Naive thymus-derived CD4-positive, alpha-beta T cell (primary cell): ENCODE measurements at regions of chr10 and their contacts with region 1.

Region 1: DNA sequence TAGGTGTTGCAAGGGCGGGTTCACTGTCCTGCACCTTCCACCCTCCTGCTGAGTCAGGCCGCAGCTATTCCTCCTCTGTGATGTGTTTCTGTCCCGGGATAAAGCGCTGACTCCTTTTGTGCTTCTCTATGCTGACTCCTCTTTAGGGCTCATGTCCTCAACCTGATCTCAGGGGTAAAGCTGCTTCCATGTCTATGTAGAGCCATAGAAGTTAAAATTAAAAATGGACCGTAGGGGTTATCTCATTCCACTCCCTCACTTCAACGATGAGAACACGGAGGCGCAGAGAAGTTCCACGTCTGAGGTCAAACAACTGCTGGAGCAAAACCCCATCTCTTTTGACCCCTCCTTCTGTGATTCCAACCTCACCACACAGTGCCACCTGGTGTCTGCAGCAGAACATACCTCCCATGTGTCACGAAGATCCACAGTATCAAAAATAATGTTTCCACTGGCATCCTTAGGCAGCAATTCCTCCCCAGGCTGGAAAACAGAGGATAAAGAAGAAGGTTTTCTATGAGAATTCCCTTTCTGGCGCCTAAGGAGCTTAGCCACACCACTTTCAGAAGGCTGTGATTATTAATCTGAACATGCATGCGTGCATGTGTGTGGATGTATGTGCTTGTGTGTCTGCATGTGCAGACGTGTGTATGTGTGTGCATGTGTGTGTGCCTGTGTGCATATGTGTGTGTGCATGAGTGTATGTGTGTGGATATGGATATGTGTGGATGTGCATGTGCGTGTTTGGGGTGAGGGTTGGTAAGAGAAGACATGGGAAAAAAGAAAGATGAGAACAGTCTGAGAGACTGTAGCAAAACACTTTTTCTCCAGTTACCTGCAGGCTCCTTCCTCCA is 81.2 kb upstream of the UCN3 start:
- DNase-seq: peak; percentile 19 to 60 (median 46)
- ATAC-seq: peak; percentile 89
- H3K4me3 ChIP-seq: no peak overlapping the region
- H3K4me3 Mint-ChIP-seq: peak overlapping the region; percentile 4 to 67 (median 56)
- H3K27ac ChIP-seq: no peak overlapping the region
- H3K27ac Mint-ChIP-seq: peak overlapping the region in 4 of 9 donors; percentile 12 to 81 (median 42)
- H3K4me1 ChIP-seq: peaks cover 6 to 11% of the 10 kb centered on the region in 2 donors
- H3K4me1 Mint-ChIP-seq: peaks cover 10 to 37% (median 25%) of the 10 kb centered on the region in 7 donors
- H3K27me3 ChIP-seq: no peaks in the 10 kb centered on the region
- H3K27me3 Mint-ChIP-seq: peaks cover 0 to 26% (median 0%) of the 10 kb centered on the region in 5 donors

Region 2: DNA sequence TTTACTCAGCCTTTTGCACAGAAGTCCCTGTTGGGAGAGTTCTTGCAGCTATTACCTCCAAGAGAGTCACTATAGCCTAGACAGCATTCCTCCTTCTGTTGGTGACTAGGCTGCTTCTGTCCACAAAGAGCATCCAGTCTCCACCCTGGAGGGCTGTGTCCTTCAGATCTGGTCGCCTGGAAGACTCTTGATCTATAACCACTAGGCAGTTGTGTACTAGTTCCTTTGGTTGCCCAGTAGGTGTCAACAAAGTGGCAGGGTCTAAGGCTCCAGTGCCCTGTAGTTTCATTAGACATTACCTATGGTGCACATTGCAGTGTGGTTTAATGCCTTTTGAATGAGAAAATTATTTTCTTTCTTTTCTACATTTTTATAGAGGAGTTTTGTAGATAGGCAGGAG is 268.6 kb before region 1 on chr10:
- CTCF ChIA-PET with region 1: no interaction called
- POLR2A ChIA-PET with region 1: no interaction called
- intact Hi-C with region 1: loop called in 1 of 2 experiments (anchors 1 kb)
- DNase-seq: peak in 1 of 9 donors; percentile 1
- ATAC-seq: no peak
- H3K4me3 ChIP-seq: no peak overlapping the region
- H3K4me3 Mint-ChIP-seq: no peak overlapping the region
- H3K27ac ChIP-seq: no peak overlapping the region
- H3K27ac Mint-ChIP-seq: no peak overlapping the region
- H3K4me1 ChIP-seq: no peaks in the 10 kb centered on the region
- H3K4me1 Mint-ChIP-seq: no peaks in the 10 kb centered on the region
- H3K27me3 ChIP-seq: no peaks in the 10 kb centered on the region
- H3K27me3 Mint-ChIP-seq: peaks cover 0 to 14% (median 4%) of the 10 kb centered on the region in 5 donors

Region 3: DNA sequence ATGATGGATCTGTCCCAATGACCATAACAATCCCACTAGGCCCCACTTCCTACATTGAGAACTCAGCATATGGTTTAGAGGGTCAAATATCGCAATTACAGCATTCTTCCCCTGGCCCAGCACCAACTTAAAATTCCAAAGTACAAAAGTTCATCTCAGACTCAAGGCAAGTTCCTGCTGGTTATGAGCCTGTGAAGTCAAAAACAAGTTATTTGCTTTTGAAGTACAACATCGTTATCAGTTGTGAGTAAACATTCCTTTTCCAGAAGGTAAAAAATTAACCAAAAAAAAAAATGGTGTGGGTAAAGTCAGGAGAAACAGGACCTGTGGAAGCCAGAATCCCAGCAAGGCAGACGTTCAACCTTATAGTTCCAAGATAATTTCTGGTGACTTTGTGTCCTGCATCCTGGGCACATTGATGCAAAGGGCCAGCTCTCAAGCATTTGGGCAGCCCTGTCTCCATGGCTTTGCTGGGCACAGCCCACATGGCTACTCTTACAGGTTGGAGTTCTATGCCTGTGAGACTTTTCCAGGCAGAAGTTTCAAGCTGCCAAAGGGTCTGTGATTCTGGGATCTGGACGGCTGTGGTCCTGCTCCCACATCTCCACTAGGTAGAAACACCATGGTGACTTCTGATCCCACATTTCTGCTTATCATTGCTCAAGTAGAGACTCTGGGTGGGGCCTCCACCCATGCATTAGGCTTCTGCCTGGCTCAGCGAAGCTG is 136.1 kb before region 1 on chr10:
- CTCF ChIA-PET with region 1: no interaction called
- POLR2A ChIA-PET with region 1: no interaction called
- intact Hi-C with region 1: no loop called
- DNase-seq: no peak
- ATAC-seq: no peak
- H3K4me3 ChIP-seq: no peak overlapping the region
- H3K4me3 Mint-ChIP-seq: no peak overlapping the region
- H3K27ac ChIP-seq: no peak overlapping the region
- H3K27ac Mint-ChIP-seq: no peak overlapping the region
- H3K4me1 ChIP-seq: no peaks in the 10 kb centered on the region
- H3K4me1 Mint-ChIP-seq: no peaks in the 10 kb centered on the region
- H3K27me3 ChIP-seq: no peaks in the 10 kb centered on the region
- H3K27me3 Mint-ChIP-seq: peaks cover 0 to 4% (median 0%) of the 10 kb centered on the region in 5 donors

Region 4: GRCh38 chr10:5165738-5166137 is 117.8 kb before region 1 on chr10:
- CTCF ChIA-PET with region 1: no interaction called
- POLR2A ChIA-PET with region 1: no interaction called
- intact Hi-C with region 1: no loop called
- DNase-seq: no peak
- ATAC-seq: no peak
- H3K4me3 ChIP-seq: no peak overlapping the region
- H3K4me3 Mint-ChIP-seq: no peak overlapping the region
- H3K27ac ChIP-seq: no peak overlapping the region
- H3K27ac Mint-ChIP-seq: no peak overlapping the region
- H3K4me1 ChIP-seq: no peaks in the 10 kb centered on the region
- H3K4me1 Mint-ChIP-seq: peaks cover 0 to 10% (median 0%) of the 10 kb centered on the region in 7 donors
- H3K27me3 ChIP-seq: no peaks in the 10 kb centered on the region
- H3K27me3 Mint-ChIP-seq: peaks cover 0 to 23% (median 0%) of the 10 kb centered on the region in 5 donors

Region 5: GRCh38 chr10:5211696-5212536 is 71.6 kb before region 1 on chr10:
- CTCF ChIA-PET with region 1: interaction called, 3 read pairs
- POLR2A ChIA-PET with region 1: no interaction called
- intact Hi-C with region 1: loop called in 1 of 2 experiments (anchors 5 kb)
- DNase-seq: no peak
- ATAC-seq: no peak
- H3K4me3 ChIP-seq: no peak overlapping the region
- H3K4me3 Mint-ChIP-seq: no peak overlapping the region
- H3K27ac ChIP-seq: no peak overlapping the region
- H3K27ac Mint-ChIP-seq: no peak overlapping the region
- H3K4me1 ChIP-seq: no peaks in the 10 kb centered on the region
- H3K4me1 Mint-ChIP-seq: peaks cover 0 to 3% (median 1%) of the 10 kb centered on the region in 7 donors
- H3K27me3 ChIP-seq: no peaks in the 10 kb centered on the region
- H3K27me3 Mint-ChIP-seq: peaks cover 0 to 38% (median 0%) of the 10 kb centered on the region in 5 donors

Region 6: GRCh38 chr10:5343562-5343961 is 60.0 kb after region 1 on chr10:
- CTCF ChIA-PET with region 1: interaction called, 9 read pairs
- POLR2A ChIA-PET with region 1: interaction called, 3 read pairs
- intact Hi-C with region 1: loop called in 1 of 2 experiments (anchors 2 kb)
- DNase-seq: peak in 3 of 9 donors; percentile 5 to 18 (median 12)
- ATAC-seq: peak; percentile 44
- H3K4me3 ChIP-seq: no peak overlapping the region
- H3K4me3 Mint-ChIP-seq: no peak overlapping the region
- H3K27ac ChIP-seq: no peak overlapping the region
- H3K27ac Mint-ChIP-seq: no peak overlapping the region
- H3K4me1 ChIP-seq: no peaks in the 10 kb centered on the region
- H3K4me1 Mint-ChIP-seq: peaks cover 0 to 7% (median 4%) of the 10 kb centered on the region in 7 donors
- H3K27me3 ChIP-seq: no peaks in the 10 kb centered on the region
- H3K27me3 Mint-ChIP-seq: peaks cover 0 to 11% (median 0%) of the 10 kb centered on the region in 5 donors

Region 7: DNA sequence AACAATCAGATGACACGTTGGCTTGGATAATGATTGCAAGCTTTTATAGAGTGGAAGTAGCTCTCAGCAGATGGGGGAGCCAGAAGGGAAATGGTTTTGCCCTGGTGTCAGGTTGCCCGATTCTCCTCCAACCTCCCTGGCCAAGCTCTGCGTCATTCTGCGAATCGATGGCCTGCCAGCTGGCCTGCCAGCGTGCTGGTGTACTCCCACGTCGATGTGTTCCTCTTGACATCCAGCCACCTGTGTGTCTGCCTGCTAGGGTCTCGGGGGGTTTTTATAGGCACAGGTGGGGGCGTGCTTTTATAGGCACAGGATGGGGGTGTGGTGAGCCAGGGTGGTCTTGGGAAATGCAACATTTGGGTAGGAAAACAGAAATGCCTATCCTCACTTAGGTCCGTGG is 133.4 kb after region 1 on chr10:
- CTCF ChIA-PET with region 1: no interaction called
- POLR2A ChIA-PET with region 1: no interaction called
- intact Hi-C with region 1: loop called in 1 of 2 experiments (anchors 5 kb)
- DNase-seq: no peak
- ATAC-seq: no peak
- H3K4me3 ChIP-seq: no peak overlapping the region
- H3K4me3 Mint-ChIP-seq: no peak overlapping the region
- H3K27ac ChIP-seq: no peak overlapping the region
- H3K27ac Mint-ChIP-seq: no peak overlapping the region
- H3K4me1 ChIP-seq: no peaks in the 10 kb centered on the region
- H3K4me1 Mint-ChIP-seq: peaks cover 0 to 13% (median 0%) of the 10 kb centered on the region in 7 donors
- H3K27me3 ChIP-seq: no peaks in the 10 kb centered on the region
- H3K27me3 Mint-ChIP-seq: peaks cover 0 to 5% (median 0%) of the 10 kb centered on the region in 5 donors

Region 8: DNA sequence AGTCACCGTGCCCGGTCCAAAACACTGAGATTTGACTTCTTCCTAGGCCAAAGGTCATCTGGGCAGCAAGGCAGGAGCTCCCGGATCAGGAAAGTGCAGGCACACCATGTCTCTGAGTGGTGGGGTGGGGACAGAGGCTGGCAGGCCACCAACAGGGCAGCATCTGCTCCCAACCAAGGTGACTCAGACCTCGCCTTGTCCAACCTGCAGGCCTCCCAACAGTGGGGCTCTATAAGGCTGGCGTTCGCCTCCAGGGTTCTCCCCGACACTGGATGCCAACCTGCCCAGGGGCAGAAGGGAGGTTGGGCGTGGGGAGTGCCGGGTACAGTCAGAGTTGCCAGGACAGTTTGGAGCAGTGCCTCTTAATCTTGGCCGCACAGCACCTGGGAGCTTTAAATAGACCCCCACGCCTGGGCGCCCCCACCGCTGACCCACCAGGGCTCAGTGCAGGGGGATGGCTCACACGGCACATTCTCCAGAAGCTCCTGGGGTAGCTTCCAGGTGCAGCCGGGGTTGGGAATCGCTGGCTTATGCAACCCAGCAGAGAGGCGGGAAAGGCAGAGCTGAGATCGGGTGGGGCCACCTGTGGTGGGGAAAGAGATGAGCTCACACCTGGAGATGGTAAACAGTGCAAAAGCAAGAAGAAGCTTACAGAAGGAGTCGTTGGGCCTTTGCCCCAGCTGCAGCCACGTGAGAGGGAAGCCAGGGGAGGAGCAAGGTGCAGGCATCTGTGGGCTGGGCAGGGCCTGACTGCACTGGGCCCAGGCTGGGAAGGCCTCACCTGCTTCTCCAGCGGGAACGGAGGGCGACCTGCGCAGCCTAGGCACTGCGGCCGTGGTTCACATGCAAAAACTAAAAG is 205.0 kb after region 1 on chr10:
- CTCF ChIA-PET with region 1: no interaction called
- POLR2A ChIA-PET with region 1: no interaction called
- intact Hi-C with region 1: no loop called
- DNase-seq: no peak
- ATAC-seq: no peak
- H3K4me3 ChIP-seq: no peak overlapping the region
- H3K4me3 Mint-ChIP-seq: no peak overlapping the region
- H3K27ac ChIP-seq: no peak overlapping the region
- H3K27ac Mint-ChIP-seq: no peak overlapping the region
- H3K4me1 ChIP-seq: no peaks in the 10 kb centered on the region
- H3K4me1 Mint-ChIP-seq: peaks cover 0 to 8% (median 0%) of the 10 kb centered on the region in 7 donors
- H3K27me3 ChIP-seq: no peaks in the 10 kb centered on the region
- H3K27me3 Mint-ChIP-seq: peaks cover 0 to 8% (median 0%) of the 10 kb centered on the region in 5 donors